Endothelial cell of umbilical vein (primary cell): ENCODE measurements at regions of chr17 and their contacts with region 1.

Region 1: DNA sequence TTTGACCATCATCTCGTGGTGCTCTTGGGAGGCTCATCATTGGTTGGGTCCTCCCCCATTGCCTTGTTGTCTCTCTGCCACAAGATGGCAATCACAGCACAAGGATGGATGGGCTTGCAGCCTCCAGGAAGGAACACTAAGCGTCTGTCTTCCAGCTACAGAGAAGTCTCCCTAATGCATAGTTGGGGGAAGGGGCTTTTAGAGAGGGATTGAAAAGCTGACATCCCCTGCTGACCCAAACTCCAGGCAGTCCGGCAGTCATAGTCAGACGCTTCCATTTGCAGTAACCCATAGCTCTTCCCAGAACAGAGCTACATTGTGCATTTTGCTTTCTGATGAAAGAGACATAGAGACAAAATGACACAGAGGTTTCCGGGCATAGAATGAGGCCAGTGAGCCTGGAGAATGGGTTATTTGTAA is 111.4 kb downstream of the UTP18 start:
- DNase-seq: peak; percentile 51
- H3K4me3 ChIP-seq: no peak overlapping the region
- H3K27ac ChIP-seq: no peak overlapping the region
- H3K4me1 ChIP-seq: no peaks in the 10 kb centered on the region
- H3K27me3 ChIP-seq: no peaks in the 10 kb centered on the region
- CTCF ChIP-seq: peak; percentile 35 to 74
- POLR2A ChIP-seq: no peak

Region 2: GRCh38 chr17:51351890-51352289 is 19.9 kb before region 1 on chr17:
- CTCF ChIA-PET with region 1: no interaction called
- POLR2A ChIA-PET with region 1: no interaction called
- dilution Hi-C with region 1: no loop called
- intact Hi-C with region 1: no loop called
- DNase-seq: no peak
- H3K4me3 ChIP-seq: no peak overlapping the region
- H3K27ac ChIP-seq: no peak overlapping the region
- H3K4me1 ChIP-seq: no peaks in the 10 kb centered on the region
- H3K27me3 ChIP-seq: peaks cover 0 to 6% of the 10 kb centered on the region in 2 experiments
- CTCF ChIP-seq: no peak
- POLR2A ChIP-seq: no peak

Region 3: GRCh38 chr17:51540151-51540550 is 168.4 kb after region 1 on chr17:
- CTCF ChIA-PET with region 1: interaction called, 10 read pairs
- POLR2A ChIA-PET with region 1: no interaction called
- dilution Hi-C with region 1: no loop called
- intact Hi-C with region 1: loop called (anchors 1 kb)
- DNase-seq: no peak
- H3K4me3 ChIP-seq: no peak overlapping the region
- H3K27ac ChIP-seq: no peak overlapping the region
- H3K4me1 ChIP-seq: no peaks in the 10 kb centered on the region
- H3K27me3 ChIP-seq: no peaks in the 10 kb centered on the region
- CTCF ChIP-seq: no peak
- POLR2A ChIP-seq: no peak

Region 4: GRCh38 chr17:51764387-51764972 is 392.7 kb after region 1 on chr17:
- CTCF ChIA-PET with region 1: no interaction called
- POLR2A ChIA-PET with region 1: no interaction called
- dilution Hi-C with region 1: no loop called
- intact Hi-C with region 1: loop called (anchors 2 kb)
- DNase-seq: peak; percentile 36
- H3K4me3 ChIP-seq: no peak overlapping the region
- H3K27ac ChIP-seq: no peak overlapping the region
- H3K4me1 ChIP-seq: no peaks in the 10 kb centered on the region
- H3K27me3 ChIP-seq: no peaks in the 10 kb centered on the region
- CTCF ChIP-seq: peak; percentile 72 to 75
- POLR2A ChIP-seq: no peak

Region 5: GRCh38 chr17:52106638-52107261 is 735.0 kb after region 1 on chr17:
- CTCF ChIA-PET with region 1: interaction called, 6 read pairs
- POLR2A ChIA-PET with region 1: no interaction called
- dilution Hi-C with region 1: no loop called
- intact Hi-C with region 1: loop called (anchors 2 kb)
- DNase-seq: peak; percentile 15
- H3K4me3 ChIP-seq: no peak overlapping the region
- H3K27ac ChIP-seq: no peak overlapping the region
- H3K4me1 ChIP-seq: no peaks in the 10 kb centered on the region
- H3K27me3 ChIP-seq: no peaks in the 10 kb centered on the region
- CTCF ChIP-seq: peak; percentile 54 to 62
- POLR2A ChIP-seq: no peak